ENCODE measurements at regions of chr7 and their contacts with region 1.

Region 1: GRCh38 chr7:55887821-55888247 is 578 bp downstream of the ZNF713 start:
- DNase-seq: no peak
- ATAC-seq: no peak
- H3K4me3 ChIP-seq: peak overlapping the region; percentile 54 to 83 (median 60)
- H3K27ac ChIP-seq: peak overlapping the region; percentile 75 to 81 (median 79)
- H3K4me1 ChIP-seq: no peaks in the 10 kb centered on the region
- H3K27me3 ChIP-seq: no peaks in the 10 kb centered on the region
- CTCF ChIP-seq: no peak
- POLR2A ChIP-seq: no peak

Region 2: DNA sequence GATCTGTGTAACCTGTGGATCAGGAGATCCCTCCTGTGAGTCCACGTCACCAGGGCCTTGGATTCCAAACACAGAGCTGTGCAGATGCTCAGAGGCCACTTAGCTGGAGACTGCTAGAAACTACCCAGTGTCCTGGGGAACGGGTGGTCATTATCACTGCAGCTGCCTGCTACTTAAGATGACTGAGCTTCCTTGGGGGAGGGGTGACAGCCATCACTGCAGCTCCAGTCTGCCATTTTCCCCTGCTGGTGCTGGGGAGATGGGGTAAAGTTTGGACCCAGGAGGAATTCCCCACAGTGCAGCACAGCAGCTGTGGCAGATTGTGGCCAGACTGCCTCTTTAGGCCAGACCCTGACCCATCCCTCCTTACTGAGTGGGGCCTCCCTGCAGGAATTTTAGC is 236.8 kb before region 1 on chr7:
- in situ Hi-C with region 1: no loop called
- intact Hi-C with region 1: no loop called
- DNase-seq: no peak
- ATAC-seq: no peak
- H3K4me3 ChIP-seq: no peak overlapping the region
- H3K27ac ChIP-seq: no peak overlapping the region
- H3K4me1 ChIP-seq: no peaks in the 10 kb centered on the region
- H3K27me3 ChIP-seq: no peaks in the 10 kb centered on the region
- CTCF ChIP-seq: no peak
- POLR2A ChIP-seq: no peak

Region 3: GRCh38 chr7:55946545-55946944 is 58.7 kb after region 1 on chr7:
- in situ Hi-C with region 1: loop called in 2 of 4 experiments (anchors 5 kb)
- intact Hi-C with region 1: no loop called
- DNase-seq: no peak
- ATAC-seq: no peak
- H3K4me3 ChIP-seq: no peak overlapping the region
- H3K27ac ChIP-seq: no peak overlapping the region
- H3K4me1 ChIP-seq: no peaks in the 10 kb centered on the region
- H3K27me3 ChIP-seq: no peaks in the 10 kb centered on the region
- CTCF ChIP-seq: no peak
- POLR2A ChIP-seq: no peak

Region 4: GRCh38 chr7:55951637-55952351 is 64.0 kb after region 1 on chr7 and contains the start of gene MRPS17:
- in situ Hi-C with region 1: loop called in 2 of 4 experiments (anchors 5 kb)
- intact Hi-C with region 1: loop called (anchors 1 kb)
- DNase-seq: peak; percentile 82 to 91
- ATAC-seq: peak; percentile 98 to 99
- H3K4me3 ChIP-seq: peak within 1 kb of the TSS; percentile 78 to 99 (median 82)
- H3K27ac ChIP-seq: peak within 1 kb of the TSS; percentile 86 to 90 (median 88)
- H3K4me1 ChIP-seq: peaks cover 9 to 12% of the 10 kb centered on the region in 2 donors
- H3K27me3 ChIP-seq: no peaks in the 10 kb centered on the region
- CTCF ChIP-seq: peak in 1 of 5 experiments; percentile 36
- POLR2A ChIP-seq: peak; percentile 74 to 76
- total RNA-seq, gene MRPS17: 14.0 to 38.3 (median 22.0) TPM

Region 5: DNA sequence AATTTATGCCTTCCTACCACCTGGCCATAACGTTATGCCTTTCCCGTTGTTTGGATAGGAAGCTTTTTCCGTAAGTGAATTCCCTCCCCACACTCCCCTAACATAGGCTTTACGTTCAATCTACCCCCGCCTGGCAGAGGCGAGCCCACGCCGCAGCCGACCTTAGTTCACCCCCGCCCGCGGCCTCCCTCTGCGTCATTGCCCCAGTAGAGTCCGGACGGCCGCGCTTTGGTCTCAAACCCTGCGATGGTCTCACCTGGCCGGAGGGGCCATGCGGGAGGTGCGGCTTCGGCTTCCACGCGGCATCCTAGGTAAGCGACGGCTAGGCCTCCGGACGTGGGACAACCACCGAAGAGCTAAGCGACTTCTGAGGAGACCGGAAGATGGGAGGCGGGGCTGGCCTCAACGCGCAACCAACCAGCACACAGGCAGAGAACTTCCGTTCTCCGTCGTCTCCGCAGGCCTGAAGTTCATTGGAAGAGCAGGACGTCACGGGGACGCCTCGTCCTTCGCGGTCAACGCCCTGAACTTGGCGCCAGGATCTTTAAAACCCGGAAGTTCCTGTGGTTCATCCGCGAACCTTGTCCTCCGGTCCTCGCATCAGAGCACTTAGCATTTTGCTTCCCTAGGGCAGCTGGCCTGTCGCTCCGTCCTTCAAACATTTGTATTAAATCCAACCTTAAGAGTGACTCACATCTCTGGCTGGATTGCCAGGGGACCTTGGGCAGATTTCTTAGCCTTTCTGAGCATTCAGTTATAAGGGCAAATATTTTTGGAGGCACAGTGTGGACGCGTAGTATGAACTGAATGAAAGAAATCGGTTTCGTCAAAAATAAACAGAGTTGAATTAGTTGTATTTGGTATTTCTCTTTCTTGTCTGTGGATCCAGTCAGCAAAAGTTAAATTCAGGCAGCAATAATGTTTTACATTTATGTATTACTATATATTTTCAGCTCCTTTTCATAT is 218.6 kb after region 1 on chr7 and contains the start of gene CHCHD2:
- in situ Hi-C with region 1: no loop called
- intact Hi-C with region 1: loop called (anchors 5 kb)
- DNase-seq: peak; percentile 96 to 98
- ATAC-seq: peak; percentile 99 to 100
- H3K4me3 ChIP-seq: peak within 1 kb of the TSS; percentile 75 to 95 (median 86)
- H3K27ac ChIP-seq: peak within 1 kb of the TSS; percentile 92 to 98 (median 94)
- H3K4me1 ChIP-seq: peaks cover 18 to 19% of the 10 kb centered on the region in 2 donors
- H3K27me3 ChIP-seq: no peaks in the 10 kb centered on the region
- CTCF ChIP-seq: peak in 1 of 5 experiments; percentile 2
- POLR2A ChIP-seq: peak; percentile 92 to 93
- total RNA-seq, gene CHCHD2: 540 to 822 (median 655) TPM

Measured in gastrocnemius medialis (tissue), 4 donors.